Esophagus muscularis mucosa (tissue), 4 donors: ENCODE measurements at regions of chr9 and their contacts with region 1.

Region 1: GRCh38 chr9:37485389-37486219 is at the start of gene POLR1E:
- DNase-seq: peak; percentile 97
- H3K4me3 ChIP-seq: peak within 1 kb of the TSS; percentile 61 to 78 (median 70)
- H3K27ac ChIP-seq: peak within 1 kb of the TSS; percentile 87 to 92 (median 88)
- H3K4me1 ChIP-seq: peaks cover 24 to 38% (median 31%) of the 10 kb centered on the region in 4 donors
- H3K27me3 ChIP-seq: no peaks in the 10 kb centered on the region
- CTCF ChIP-seq: no peak
- EP300 ChIP-seq: no peak
- POLR2A ChIP-seq: peak; percentile 45
- total RNA-seq, gene POLR1E: 17.4 to 36.8 (median 24.5) TPM

Region 2: GRCh38 chr9:37371565-37372464 is 113.8 kb before region 1 on chr9:
- intact Hi-C with region 1: no loop called
- DNase-seq: no peak
- H3K4me3 ChIP-seq: no peak overlapping the region
- H3K27ac ChIP-seq: no peak overlapping the region
- H3K4me1 ChIP-seq: no peaks in the 10 kb centered on the region
- H3K27me3 ChIP-seq: no peaks in the 10 kb centered on the region
- CTCF ChIP-seq: no peak
- EP300 ChIP-seq: no peak
- POLR2A ChIP-seq: no peak

Region 3: GRCh38 chr9:37575921-37576721 is 90.5 kb after region 1 on chr9 and contains the start of gene FBXO10:
- intact Hi-C with region 1: loop called (anchors 5 kb)
- DNase-seq: no peak
- H3K4me3 ChIP-seq: peak within 1 kb of the TSS; percentile 76 to 86 (median 84)
- H3K27ac ChIP-seq: peak within 1 kb of the TSS; percentile 91 to 96 (median 92)
- H3K4me1 ChIP-seq: peaks cover 20 to 34% (median 30%) of the 10 kb centered on the region in 4 donors
- H3K27me3 ChIP-seq: no peaks in the 10 kb centered on the region
- CTCF ChIP-seq: peak in 1 of 3 experiments; percentile 15
- EP300 ChIP-seq: no peak
- POLR2A ChIP-seq: no peak
- total RNA-seq, gene FBXO10: 5.5 to 11.2 (median 9.0) TPM

Region 4: DNA sequence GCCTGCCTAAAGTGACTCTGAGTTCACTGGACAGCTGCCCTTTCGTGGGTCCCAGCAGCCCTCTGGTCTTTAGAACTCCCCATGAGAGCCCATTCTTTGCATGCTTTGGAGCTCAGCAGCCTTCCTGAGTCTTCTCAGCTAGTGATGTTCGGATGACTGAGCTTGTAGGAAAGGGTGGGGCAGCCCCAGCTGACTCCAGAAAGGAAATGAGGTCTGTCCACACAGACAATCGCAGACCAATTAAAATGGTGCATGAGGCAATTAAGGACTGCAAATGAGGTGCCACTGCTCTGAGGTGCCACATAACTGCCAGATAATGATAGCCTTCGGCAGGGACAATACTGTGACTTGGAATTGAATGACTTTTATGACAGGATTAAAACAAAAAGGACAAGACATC is 132.2 kb after region 1 on chr9:
- intact Hi-C with region 1: no loop called
- DNase-seq: no peak
- H3K4me3 ChIP-seq: no peak overlapping the region
- H3K27ac ChIP-seq: no peak overlapping the region
- H3K4me1 ChIP-seq: no peaks in the 10 kb centered on the region
- H3K27me3 ChIP-seq: peaks cover 0 to 3% (median 0%) of the 10 kb centered on the region in 4 donors
- CTCF ChIP-seq: no peak
- EP300 ChIP-seq: no peak
- POLR2A ChIP-seq: no peak

Region 5: GRCh38 chr9:37784616-37785483 is 299.2 kb after region 1 on chr9 and contains the start of gene EXOSC3:
- intact Hi-C with region 1: loop called (anchors 10 kb)
- DNase-seq: peak; percentile 97
- H3K4me3 ChIP-seq: peak within 1 kb of the TSS; percentile 71 to 97 (median 91)
- H3K27ac ChIP-seq: peak within 1 kb of the TSS; percentile 84 to 89 (median 87)
- H3K4me1 ChIP-seq: peaks cover 10 to 34% (median 26%) of the 10 kb centered on the region in 4 donors
- H3K27me3 ChIP-seq: peaks cover 0 to 9% (median 5%) of the 10 kb centered on the region in 4 donors
- CTCF ChIP-seq: peak in 1 of 3 experiments; percentile 2
- EP300 ChIP-seq: no peak
- POLR2A ChIP-seq: peak; percentile 39
- total RNA-seq, gene EXOSC3: 32.0 to 52.0 (median 43.0) TPM